ENCODE measurements at regions of chr17 and their contacts with region 1.

Region 1: GRCh38 chr17:63993368-63993985 is 4.7 kb upstream of the PRR29 start:
- DNase-seq: peak; percentile 43
- H3K4me3 ChIP-seq: no peak overlapping the region
- H3K27ac ChIP-seq: no peak overlapping the region
- H3K4me1 ChIP-seq: peaks cover 0 to 23% (median 18%) of the 10 kb centered on the region in 4 donors
- H3K27me3 ChIP-seq: peaks cover 5 to 50% (median 21%) of the 10 kb centered on the region in 3 donors
- CTCF ChIP-seq: no peak
- EP300 ChIP-seq: no peak
- POLR2A ChIP-seq: no peak

Region 2: GRCh38 chr17:63859257-63859656 is 134.2 kb before region 1 on chr17:
- intact Hi-C with region 1: no loop called
- DNase-seq: no peak
- H3K4me3 ChIP-seq: no peak overlapping the region
- H3K27ac ChIP-seq: no peak overlapping the region
- H3K4me1 ChIP-seq: no peaks in the 10 kb centered on the region
- H3K27me3 ChIP-seq: no peaks in the 10 kb centered on the region
- CTCF ChIP-seq: no peak
- EP300 ChIP-seq: no peak
- POLR2A ChIP-seq: no peak

Region 3: GRCh38 chr17:63911657-63912426 is 81.6 kb before region 1 on chr17:
- intact Hi-C with region 1: loop called (anchors 5 kb)
- DNase-seq: no peak
- H3K4me3 ChIP-seq: no peak overlapping the region
- H3K27ac ChIP-seq: no peak overlapping the region
- H3K4me1 ChIP-seq: no peaks in the 10 kb centered on the region
- H3K27me3 ChIP-seq: peaks cover 0 to 5% (median 0%) of the 10 kb centered on the region in 3 donors
- CTCF ChIP-seq: peak; percentile 8 to 85 (median 34)
- EP300 ChIP-seq: no peak
- POLR2A ChIP-seq: no peak

Region 4: GRCh38 chr17:63954402-63955063 is 38.9 kb before region 1 on chr17:
- intact Hi-C with region 1: loop called (anchors 5 kb)
- DNase-seq: no peak
- H3K4me3 ChIP-seq: no peak overlapping the region
- H3K27ac ChIP-seq: no peak overlapping the region
- H3K4me1 ChIP-seq: no peaks in the 10 kb centered on the region
- H3K27me3 ChIP-seq: no peaks in the 10 kb centered on the region
- CTCF ChIP-seq: no peak
- EP300 ChIP-seq: no peak
- POLR2A ChIP-seq: no peak

Measured in sigmoid colon (tissue), 7 donors.